ENCODE measurements at regions of chr5 and their contacts with region 1.

Region 1: DNA sequence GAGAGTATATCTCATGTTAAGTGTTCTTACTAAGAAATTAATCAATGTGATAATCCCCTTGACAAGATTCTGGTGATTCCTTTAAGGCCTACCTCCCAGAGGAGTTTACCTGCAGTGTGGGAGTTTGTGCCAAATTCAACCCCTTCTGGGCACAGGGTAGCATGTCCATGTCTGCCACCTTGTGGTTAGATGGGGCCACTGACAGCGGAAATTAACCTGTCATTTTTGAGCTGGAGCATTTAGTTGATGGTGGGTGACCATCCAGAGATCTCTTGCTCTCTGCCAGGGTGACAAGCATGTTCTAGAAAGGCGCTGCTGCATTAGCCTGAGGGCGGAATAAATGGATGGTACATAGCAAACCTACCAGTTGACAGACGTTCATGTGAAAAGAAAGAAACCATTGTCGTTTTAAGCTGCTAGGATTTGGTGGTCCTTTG is 132.2 kb downstream of the FBXO4 start:
- DNase-seq: peak; percentile 0
- H3K4me3 ChIP-seq: no peak overlapping the region
- H3K27ac ChIP-seq: no peak overlapping the region
- H3K27me3 ChIP-seq: no peaks in the 10 kb centered on the region
- CTCF ChIP-seq: peak; percentile 71

Region 2: GRCh38 chr5:42043400-42043799 is 13.9 kb before region 1 on chr5:
- CTCF ChIA-PET with region 1: interaction called, 24 read pairs
- POLR2A ChIA-PET with region 1: no interaction called
- DNase-seq: no peak
- H3K4me3 ChIP-seq: no peak overlapping the region
- H3K27ac ChIP-seq: no peak overlapping the region
- H3K27me3 ChIP-seq: no peaks in the 10 kb centered on the region
- CTCF ChIP-seq: no peak

Measured in AG04450 (cell line).